Left lung (tissue), 14 donors: ENCODE measurements at regions of chr10 and their contacts with region 1.

Region 1: DNA sequence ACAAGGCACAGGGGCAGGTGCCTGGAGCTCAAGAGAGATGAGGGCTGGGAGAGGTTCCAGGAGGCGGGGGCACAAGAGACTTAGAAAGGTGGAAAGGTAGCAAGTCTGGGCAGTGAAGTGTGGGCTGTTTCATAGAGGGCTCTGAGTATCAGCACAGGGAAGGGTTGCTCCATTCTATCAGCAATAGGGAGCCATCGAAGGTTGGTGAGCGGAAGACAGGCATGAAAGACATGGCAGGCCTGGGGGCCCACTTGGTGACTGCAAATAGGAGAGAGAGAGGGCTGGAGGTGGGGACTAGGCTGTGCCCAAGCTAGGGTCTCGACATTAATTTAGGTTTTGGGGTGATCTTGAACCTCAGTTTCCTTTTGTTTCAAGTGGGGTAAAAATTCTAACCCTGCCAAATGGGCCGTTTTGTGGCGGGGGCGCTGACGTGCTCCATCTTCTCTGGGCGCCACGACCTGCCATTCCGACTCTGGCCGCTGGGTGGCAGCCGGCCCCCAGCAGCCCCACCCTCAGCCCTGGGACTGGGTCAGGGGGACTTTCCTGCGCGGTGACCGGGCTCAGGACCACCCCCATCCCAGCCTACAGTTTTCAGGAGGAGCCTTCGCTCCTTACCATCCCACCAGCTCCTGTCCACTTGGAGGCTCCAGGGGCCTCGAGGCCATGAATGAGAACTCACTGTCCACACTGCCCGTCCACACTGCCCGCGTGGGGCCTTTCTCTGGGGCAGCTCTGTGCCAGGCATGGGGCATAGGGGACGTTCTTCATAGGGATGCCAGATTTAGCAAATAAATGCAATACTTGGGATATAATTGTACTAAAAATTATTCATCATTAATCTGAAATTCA is 37.2 kb upstream of the PCBD1 start:
- DNase-seq: peak in 3 of 4 donors; percentile 36 to 90 (median 49)
- ATAC-seq: peak; percentile 78
- H3K4me3 ChIP-seq: no peak overlapping the region
- H3K27ac ChIP-seq: no peak overlapping the region
- H3K4me1 ChIP-seq: no peaks in the 10 kb centered on the region
- H3K27me3 ChIP-seq: no peaks in the 10 kb centered on the region
- CTCF ChIP-seq: peak; percentile 96

Region 2: GRCh38 chr10:70985824-70986622 is 60.4 kb after region 1 on chr10:
- intact Hi-C with region 1: no loop called
- DNase-seq: no peak
- ATAC-seq: no peak
- H3K4me3 ChIP-seq: no peak overlapping the region
- H3K27ac ChIP-seq: no peak overlapping the region
- H3K4me1 ChIP-seq: no peaks in the 10 kb centered on the region
- H3K27me3 ChIP-seq: no peaks in the 10 kb centered on the region
- CTCF ChIP-seq: no peak

Region 3: GRCh38 chr10:71285180-71285545 is 359.6 kb after region 1 on chr10:
- intact Hi-C with region 1: loop called in 1 of 2 experiments (anchors 10 kb)
- DNase-seq: peak in 2 of 4 donors; percentile 54 to 75
- ATAC-seq: peak; percentile 83
- H3K4me3 ChIP-seq: no peak overlapping the region
- H3K27ac ChIP-seq: no peak overlapping the region
- H3K4me1 ChIP-seq: no peaks in the 10 kb centered on the region
- H3K27me3 ChIP-seq: no peaks in the 10 kb centered on the region
- CTCF ChIP-seq: peak; percentile 60 to 66